ENCODE measurements at regions of chr6 and their contacts with region 1.

Region 1: GRCh38 chr6:35202066-35202546 is 11.7 kb upstream of the SCUBE3 start:
- DNase-seq: no peak
- H3K4me3 ChIP-seq: no peak overlapping the region
- H3K27ac ChIP-seq: no peak overlapping the region
- H3K4me1 ChIP-seq: no peaks in the 10 kb centered on the region
- H3K27me3 ChIP-seq: no peaks in the 10 kb centered on the region
- CTCF ChIP-seq: no peak
- EP300 ChIP-seq: no peak
- POLR2A ChIP-seq: no peak

Region 2: GRCh38 chr6:34986845-34987246 is 215.3 kb before region 1 on chr6:
- intact Hi-C with region 1: loop called (anchors 1 kb)
- DNase-seq: no peak
- H3K4me3 ChIP-seq: no peak overlapping the region
- H3K27ac ChIP-seq: peak overlapping the region in 3 of 4 donors; percentile 28 to 42 (median 35)
- H3K4me1 ChIP-seq: peaks cover 6 to 23% (median 22%) of the 10 kb centered on the region in 4 donors
- H3K27me3 ChIP-seq: no peaks in the 10 kb centered on the region
- CTCF ChIP-seq: peak; percentile 77 to 91 (median 86)
- EP300 ChIP-seq: no peak
- POLR2A ChIP-seq: no peak

Region 3: GRCh38 chr6:35146453-35146852 is 55.7 kb before region 1 on chr6:
- intact Hi-C with region 1: loop called (anchors 5 kb)
- DNase-seq: no peak
- H3K4me3 ChIP-seq: no peak overlapping the region
- H3K27ac ChIP-seq: no peak overlapping the region
- H3K4me1 ChIP-seq: peaks cover 0 to 19% (median 8%) of the 10 kb centered on the region in 4 donors
- H3K27me3 ChIP-seq: peaks cover 0 to under 1% (median 0%) of the 10 kb centered on the region in 4 donors
- CTCF ChIP-seq: peak; percentile 54 to 61 (median 57)
- EP300 ChIP-seq: no peak
- POLR2A ChIP-seq: no peak

Region 4: GRCh38 chr6:35240840-35241801 is 39.0 kb after region 1 on chr6:
- intact Hi-C with region 1: loop called (anchors 2 kb)
- DNase-seq: no peak
- H3K4me3 ChIP-seq: no peak overlapping the region
- H3K27ac ChIP-seq: peak overlapping the region; percentile 25 to 60 (median 48)
- H3K4me1 ChIP-seq: peaks cover 28 to 72% (median 53%) of the 10 kb centered on the region in 4 donors
- H3K27me3 ChIP-seq: no peaks in the 10 kb centered on the region
- CTCF ChIP-seq: peak; percentile 92 to 97 (median 96)
- EP300 ChIP-seq: no peak
- POLR2A ChIP-seq: no peak

Region 5: DNA sequence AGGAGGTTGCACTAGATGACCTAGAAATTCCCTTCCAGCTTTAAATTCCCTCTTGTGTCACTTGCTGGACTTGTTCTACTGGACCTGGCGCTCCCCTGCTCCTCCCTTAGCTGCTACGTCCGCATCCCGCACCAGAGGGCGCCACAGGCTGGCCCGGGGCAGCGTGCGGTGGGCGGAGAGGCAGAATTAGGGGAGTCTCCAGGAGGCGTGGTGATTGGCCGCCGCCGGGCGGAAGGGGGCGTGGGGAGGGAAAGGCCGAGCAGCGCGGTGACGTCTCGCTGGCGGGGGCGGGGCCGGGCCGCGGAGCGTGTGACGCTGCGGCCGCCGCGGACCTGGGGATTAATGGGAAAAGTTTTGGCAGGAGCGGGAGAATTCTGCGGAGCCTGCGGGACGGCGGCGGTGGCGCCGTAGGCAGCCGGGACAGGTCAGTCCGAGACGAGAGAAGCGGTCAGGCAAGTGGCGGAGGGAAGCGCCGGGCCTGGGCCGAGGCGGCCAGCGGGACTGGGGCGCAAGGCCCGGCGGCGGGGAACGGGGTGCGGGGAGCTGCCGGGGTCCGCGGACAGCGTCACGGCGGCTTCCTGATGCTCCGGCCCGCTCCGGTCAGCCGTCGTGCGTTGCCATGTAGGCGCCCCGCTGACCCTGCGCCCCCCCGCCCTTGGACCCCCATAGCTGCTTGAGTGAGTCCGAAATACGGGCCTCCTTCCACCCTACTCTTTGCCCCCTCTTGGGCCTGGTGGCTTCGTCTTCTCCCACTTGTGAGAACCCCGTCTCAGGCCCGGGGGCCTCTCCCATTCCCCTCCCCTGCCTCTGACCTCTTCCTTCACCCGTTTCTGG is 140.4 kb after region 1 on chr6 and contains the start of gene PPARD:
- intact Hi-C with region 1: no loop called
- DNase-seq: peak; percentile 99
- H3K4me3 ChIP-seq: peak within 1 kb of the TSS; percentile 79 to 93 (median 83)
- H3K27ac ChIP-seq: peak within 1 kb of the TSS; percentile 90 to 92 (median 90)
- H3K4me1 ChIP-seq: peaks cover 13 to 37% (median 30%) of the 10 kb centered on the region in 4 donors
- H3K27me3 ChIP-seq: peaks cover 0 to 4% (median 0%) of the 10 kb centered on the region in 4 donors
- CTCF ChIP-seq: peak; percentile 98 to 100 (median 99)
- EP300 ChIP-seq: no peak
- POLR2A ChIP-seq: peak; percentile 72
- total RNA-seq, gene PPARD: 10.8 to 22.4 (median 16.0) TPM